AG04449 (cell line): ENCODE measurements at regions of chr1 and their contacts with region 1.

Region 1: GRCh38 chr1:54944610-54945544 is 35.6 kb upstream of the TMEM61 start:
- DNase-seq: peak; percentile 41
- H3K4me3 ChIP-seq: no peak overlapping the region
- CTCF ChIP-seq: peak; percentile 77

Region 2: GRCh38 chr1:54904476-54905048 is 40.3 kb before region 1 on chr1:
- CTCF ChIA-PET with region 1: interaction called, 16 read pairs
- POLR2A ChIA-PET with region 1: no interaction called
- DNase-seq: peak; percentile 89
- H3K4me3 ChIP-seq: no peak overlapping the region
- CTCF ChIP-seq: no peak

Region 3: GRCh38 chr1:54928327-54928726 is 16.6 kb before region 1 on chr1:
- CTCF ChIA-PET with region 1: interaction called, 40 read pairs
- POLR2A ChIA-PET with region 1: no interaction called
- DNase-seq: no peak
- H3K4me3 ChIP-seq: no peak overlapping the region
- CTCF ChIP-seq: no peak

Region 4: GRCh38 chr1:54965624-54966340 is 20.9 kb after region 1 on chr1:
- CTCF ChIA-PET with region 1: interaction called, 59 read pairs
- POLR2A ChIA-PET with region 1: no interaction called
- DNase-seq: no peak
- H3K4me3 ChIP-seq: no peak overlapping the region
- CTCF ChIP-seq: no peak

Region 5: DNA sequence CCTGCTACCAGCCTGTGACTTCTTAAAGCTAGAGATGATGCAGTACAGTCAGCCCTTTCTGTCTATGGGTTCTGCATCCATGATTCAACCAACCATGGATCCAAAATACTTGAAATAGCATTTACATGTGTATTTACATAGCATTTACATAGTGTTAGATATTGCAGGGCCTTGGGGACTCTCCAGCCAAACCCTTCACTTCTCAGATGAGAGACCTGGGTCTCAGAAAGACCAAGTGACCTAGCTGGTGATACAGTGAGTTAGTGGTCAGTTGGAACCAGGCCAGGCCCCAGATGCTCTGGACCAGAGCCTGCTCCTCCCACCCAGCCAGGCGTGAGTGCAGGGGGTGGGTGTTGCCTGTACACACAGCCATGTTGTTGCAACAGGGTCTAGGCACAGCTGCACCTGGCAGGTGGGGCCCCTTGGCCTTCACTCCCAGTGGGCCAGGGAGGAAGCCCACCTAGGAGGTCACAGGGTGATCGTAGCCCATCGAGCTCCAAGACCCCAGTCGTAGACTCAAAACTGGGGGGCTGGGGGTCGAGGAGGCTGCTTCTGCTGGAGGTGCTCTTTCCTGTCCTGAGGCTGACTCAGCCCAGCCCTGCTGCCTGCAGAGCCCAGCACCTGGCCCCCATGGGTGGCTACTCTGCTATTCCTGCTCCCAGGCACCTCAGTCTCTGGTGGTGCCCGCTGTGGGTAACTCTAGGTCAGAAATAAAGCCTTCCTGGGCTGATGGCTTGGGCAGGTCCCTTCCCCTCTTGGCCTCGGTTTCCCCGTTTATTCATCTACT is 43.2 kb after region 1 on chr1:
- CTCF ChIA-PET with region 1: interaction called, 209 read pairs
- POLR2A ChIA-PET with region 1: no interaction called
- DNase-seq: peak; percentile 66
- H3K4me3 ChIP-seq: no peak overlapping the region
- CTCF ChIP-seq: no peak

Region 6: GRCh38 chr1:55021965-55022546 is 77.2 kb after region 1 on chr1:
- CTCF ChIA-PET with region 1: interaction called, 656 read pairs
- POLR2A ChIA-PET with region 1: no interaction called
- DNase-seq: peak; percentile 40
- H3K4me3 ChIP-seq: no peak overlapping the region
- CTCF ChIP-seq: peak; percentile 95